ENCODE measurements at regions of chr5 and their contacts with region 1.

Region 1: DNA sequence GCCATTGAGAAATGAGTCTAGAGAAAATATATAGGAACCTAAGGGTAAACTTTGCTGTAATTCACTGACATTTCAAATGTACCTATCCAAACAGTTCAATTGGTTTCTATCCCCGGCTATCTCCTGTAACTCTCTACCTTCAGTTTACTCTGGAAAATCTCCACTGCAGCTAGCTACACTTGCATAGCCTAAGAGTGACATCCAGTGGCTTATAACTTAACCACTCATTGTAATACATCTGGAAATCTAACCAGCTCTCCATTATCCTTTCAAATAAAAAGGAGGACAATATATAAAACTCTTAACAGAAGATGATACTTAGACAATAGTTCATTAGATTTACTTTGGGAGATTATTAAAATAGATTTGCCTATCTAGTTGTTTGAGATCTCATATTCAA is 35.3 kb upstream of the SPDL1 start:
- DNase-seq: peak in 1 of 2 experiments; percentile 56
- H3K4me3 ChIP-seq: no peak overlapping the region
- H3K4me3 Mint-ChIP-seq: no peak overlapping the region
- H3K27ac Mint-ChIP-seq: no peak overlapping the region
- H3K4me1 ChIP-seq: peaks cover 6% of the 10 kb centered on the region
- H3K4me1 Mint-ChIP-seq: peaks cover 17% of the 10 kb centered on the region
- H3K27me3 ChIP-seq: no peaks in the 10 kb centered on the region
- H3K27me3 Mint-ChIP-seq: no peaks in the 10 kb centered on the region
- CTCF ChIP-seq: peak; percentile 51 to 57

Region 2: GRCh38 chr5:168706655-168707069 is 841.7 kb before region 1 on chr5:
- CTCF ChIA-PET with region 1: interaction called, 3 read pairs
- POLR2A ChIA-PET with region 1: no interaction called
- intact Hi-C with region 1: loop called (anchors 1 kb)
- DNase-seq: peak; percentile 68
- H3K4me3 ChIP-seq: no peak overlapping the region
- H3K4me3 Mint-ChIP-seq: no peak overlapping the region
- H3K27ac Mint-ChIP-seq: peak overlapping the region; percentile 30
- H3K4me1 ChIP-seq: no peaks in the 10 kb centered on the region
- H3K4me1 Mint-ChIP-seq: no peaks in the 10 kb centered on the region
- H3K27me3 ChIP-seq: no peaks in the 10 kb centered on the region
- H3K27me3 Mint-ChIP-seq: no peaks in the 10 kb centered on the region
- CTCF ChIP-seq: peak; percentile 63 to 84

Region 3: DNA sequence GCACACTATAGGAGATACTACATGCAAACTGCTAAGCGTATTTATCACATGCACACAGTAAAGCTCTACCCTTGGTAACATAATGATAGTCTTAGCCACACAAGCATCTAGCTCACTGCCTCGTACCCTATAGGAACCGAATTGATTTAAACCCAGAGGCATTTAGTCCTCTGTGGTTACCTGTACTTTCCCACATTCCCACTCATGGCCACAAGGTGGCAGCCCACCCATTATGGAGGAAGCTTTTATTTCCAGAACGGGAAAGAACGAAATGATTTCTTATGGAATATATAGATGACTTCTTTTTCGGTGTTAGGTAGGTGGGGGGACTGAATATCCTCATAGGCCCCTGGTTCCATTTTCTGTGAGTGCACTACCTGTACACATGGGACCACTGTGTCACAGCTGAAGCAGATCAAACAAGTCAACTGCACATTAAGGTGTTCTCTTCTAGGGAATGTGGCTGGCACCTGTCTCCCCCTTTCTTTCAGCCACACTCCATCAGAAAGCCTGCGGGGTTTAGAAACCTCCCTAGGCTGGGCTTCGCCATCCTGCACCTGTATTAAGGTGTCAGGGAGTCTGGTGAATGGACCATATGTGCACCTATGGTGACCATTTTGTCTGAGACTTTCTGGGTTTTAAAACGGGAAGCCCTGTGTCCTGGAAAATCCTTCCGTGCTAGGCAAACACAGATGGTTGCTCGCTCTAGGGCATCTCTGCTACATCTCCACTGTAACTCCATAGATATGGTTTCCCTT is 560.6 kb before region 1 on chr5:
- CTCF ChIA-PET with region 1: interaction called, 17 read pairs
- POLR2A ChIA-PET with region 1: no interaction called
- intact Hi-C with region 1: loop called (anchors 1 kb)
- DNase-seq: peak; percentile 71 to 81
- H3K4me3 ChIP-seq: no peak overlapping the region
- H3K4me3 Mint-ChIP-seq: peak overlapping the region; percentile 43
- H3K27ac Mint-ChIP-seq: no peak overlapping the region
- H3K4me1 ChIP-seq: peaks cover 21% of the 10 kb centered on the region
- H3K4me1 Mint-ChIP-seq: peaks cover 40% of the 10 kb centered on the region
- H3K27me3 ChIP-seq: no peaks in the 10 kb centered on the region
- H3K27me3 Mint-ChIP-seq: no peaks in the 10 kb centered on the region
- CTCF ChIP-seq: peak; percentile 86 to 92

Region 4: GRCh38 chr5:169223595-169223953 is 324.7 kb before region 1 on chr5:
- CTCF ChIA-PET with region 1: interaction called, 3 read pairs
- POLR2A ChIA-PET with region 1: no interaction called
- intact Hi-C with region 1: loop called (anchors 2 kb)
- DNase-seq: peak; percentile 78 to 87
- H3K4me3 ChIP-seq: no peak overlapping the region
- H3K4me3 Mint-ChIP-seq: peak overlapping the region; percentile 39
- H3K27ac Mint-ChIP-seq: peak overlapping the region; percentile 83
- H3K4me1 ChIP-seq: peaks cover 65% of the 10 kb centered on the region
- H3K4me1 Mint-ChIP-seq: peaks cover 56% of the 10 kb centered on the region
- H3K27me3 ChIP-seq: no peaks in the 10 kb centered on the region
- H3K27me3 Mint-ChIP-seq: no peaks in the 10 kb centered on the region
- CTCF ChIP-seq: no peak

Region 5: DNA sequence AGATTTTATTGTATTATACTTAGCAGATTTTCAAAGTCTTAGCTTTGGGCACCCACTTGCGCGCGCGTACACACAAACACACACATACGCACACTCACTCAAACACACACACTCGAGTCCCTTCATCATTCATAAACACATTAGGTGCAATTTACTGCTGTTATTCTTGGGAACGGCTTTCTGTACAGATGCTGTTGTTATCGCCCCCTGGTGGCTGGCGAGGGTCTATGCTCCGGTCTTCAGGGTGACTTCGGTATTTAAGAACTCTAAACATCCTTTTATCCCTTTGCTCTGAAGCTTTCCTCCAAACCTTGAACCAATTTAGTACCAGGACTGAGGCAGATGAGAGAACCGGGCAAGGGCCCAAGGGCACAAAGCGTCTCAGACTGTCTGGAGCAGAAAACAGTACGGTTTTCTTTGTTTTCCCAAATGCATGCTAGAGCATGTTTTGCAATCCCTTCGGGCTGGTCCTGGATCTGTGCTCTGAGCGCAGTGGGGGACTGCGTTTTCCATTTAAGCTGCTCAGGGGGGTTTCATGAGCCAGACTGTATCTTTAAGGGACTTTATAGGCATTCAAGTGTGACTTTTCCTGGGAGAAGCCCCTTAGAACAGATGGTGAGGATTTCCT is 245.7 kb before region 1 on chr5:
- CTCF ChIA-PET with region 1: no interaction called
- POLR2A ChIA-PET with region 1: no interaction called
- intact Hi-C with region 1: loop called (anchors 1 kb)
- DNase-seq: peak; percentile 71 to 77
- H3K4me3 ChIP-seq: no peak overlapping the region
- H3K4me3 Mint-ChIP-seq: no peak overlapping the region
- H3K27ac Mint-ChIP-seq: peak overlapping the region; percentile 18
- H3K4me1 ChIP-seq: peaks cover 34% of the 10 kb centered on the region
- H3K4me1 Mint-ChIP-seq: peaks cover 45% of the 10 kb centered on the region
- H3K27me3 ChIP-seq: no peaks in the 10 kb centered on the region
- H3K27me3 Mint-ChIP-seq: no peaks in the 10 kb centered on the region
- CTCF ChIP-seq: peak; percentile 84 to 87

Region 6: GRCh38 chr5:169571355-169571754 is 23.0 kb after region 1 on chr5:
- CTCF ChIA-PET with region 1: no interaction called
- POLR2A ChIA-PET with region 1: no interaction called
- intact Hi-C with region 1: no loop called
- DNase-seq: no peak
- H3K4me3 ChIP-seq: no peak overlapping the region
- H3K4me3 Mint-ChIP-seq: no peak overlapping the region
- H3K27ac Mint-ChIP-seq: no peak overlapping the region
- H3K4me1 ChIP-seq: peaks cover 9% of the 10 kb centered on the region
- H3K4me1 Mint-ChIP-seq: peaks cover 16% of the 10 kb centered on the region
- H3K27me3 ChIP-seq: no peaks in the 10 kb centered on the region
- H3K27me3 Mint-ChIP-seq: no peaks in the 10 kb centered on the region
- CTCF ChIP-seq: no peak

Region 7: GRCh38 chr5:169583424-169584204 is 35.3 kb after region 1 on chr5 and contains the start of gene SPDL1:
- CTCF ChIA-PET with region 1: no interaction called
- POLR2A ChIA-PET with region 1: no interaction called
- intact Hi-C with region 1: loop called (anchors 1 kb)
- DNase-seq: peak; percentile 95 to 97
- H3K4me3 ChIP-seq: peak within 1 kb of the TSS; percentile 84
- H3K4me3 Mint-ChIP-seq: peak within 1 kb of the TSS; percentile 94
- H3K27ac Mint-ChIP-seq: peak within 1 kb of the TSS; percentile 97
- H3K4me1 ChIP-seq: no peaks in the 10 kb centered on the region; the same call in 1 of the 2 replicates
- H3K4me1 Mint-ChIP-seq: peaks cover 28% of the 10 kb centered on the region
- H3K27me3 ChIP-seq: no peaks in the 10 kb centered on the region
- H3K27me3 Mint-ChIP-seq: no peaks in the 10 kb centered on the region
- CTCF ChIP-seq: no peak
- total RNA-seq, gene SPDL1: 57.8 and 60.0 TPM in 2 replicates

Measured in Caco-2 (cell line).